Right lobe of liver (tissue), 6 donors: ENCODE measurements at regions of chr2 and their contacts with region 1.

Region 1: GRCh38 chr2:204152616-204153015 is 216.1 kb downstream of the ICOS start:
- DNase-seq: no peak
- ATAC-seq: peak in 2 of 4 donors; percentile 25 to 46
- H3K4me3 ChIP-seq: no peak overlapping the region
- H3K27ac ChIP-seq: no peak overlapping the region
- H3K4me1 ChIP-seq: no peaks in the 10 kb centered on the region
- H3K27me3 ChIP-seq: no peaks in the 10 kb centered on the region
- CTCF ChIP-seq: no peak
- POLR2A ChIP-seq: no peak

Region 2: DNA sequence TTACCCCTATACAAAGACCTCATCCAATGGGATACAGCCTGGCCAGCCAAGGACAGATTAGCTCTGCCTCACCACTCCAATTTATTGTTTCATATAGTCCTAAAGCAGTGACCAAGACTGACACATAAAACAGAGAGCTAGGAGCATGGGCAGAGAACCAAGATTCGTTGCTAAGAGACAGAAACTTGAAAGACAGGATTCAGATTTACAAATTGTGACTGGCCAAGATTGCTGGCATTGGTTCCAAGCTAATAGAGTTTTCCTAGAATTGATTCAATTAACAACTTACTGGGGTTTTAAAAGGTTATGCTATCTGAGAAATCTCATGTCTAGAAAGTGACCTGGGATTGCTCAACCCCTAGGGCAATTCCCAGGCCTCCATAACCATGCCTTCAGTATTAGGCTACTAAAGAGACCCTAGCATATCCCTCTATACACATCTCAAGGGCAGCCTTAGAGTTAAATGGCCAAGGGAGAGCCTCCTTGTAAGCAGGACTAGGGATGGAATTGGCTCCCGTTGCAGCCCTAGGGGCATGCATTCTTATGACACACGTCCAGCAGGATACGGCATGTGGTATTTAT is 140.5 kb before region 1 on chr2:
- intact Hi-C with region 1: no loop called
- DNase-seq: no peak
- ATAC-seq: peak in 1 of 4 donors; percentile 24
- H3K4me3 ChIP-seq: no peak overlapping the region
- H3K27ac ChIP-seq: no peak overlapping the region
- H3K4me1 ChIP-seq: no peaks in the 10 kb centered on the region
- H3K27me3 ChIP-seq: no peaks in the 10 kb centered on the region
- CTCF ChIP-seq: no peak
- POLR2A ChIP-seq: no peak

Region 3: DNA sequence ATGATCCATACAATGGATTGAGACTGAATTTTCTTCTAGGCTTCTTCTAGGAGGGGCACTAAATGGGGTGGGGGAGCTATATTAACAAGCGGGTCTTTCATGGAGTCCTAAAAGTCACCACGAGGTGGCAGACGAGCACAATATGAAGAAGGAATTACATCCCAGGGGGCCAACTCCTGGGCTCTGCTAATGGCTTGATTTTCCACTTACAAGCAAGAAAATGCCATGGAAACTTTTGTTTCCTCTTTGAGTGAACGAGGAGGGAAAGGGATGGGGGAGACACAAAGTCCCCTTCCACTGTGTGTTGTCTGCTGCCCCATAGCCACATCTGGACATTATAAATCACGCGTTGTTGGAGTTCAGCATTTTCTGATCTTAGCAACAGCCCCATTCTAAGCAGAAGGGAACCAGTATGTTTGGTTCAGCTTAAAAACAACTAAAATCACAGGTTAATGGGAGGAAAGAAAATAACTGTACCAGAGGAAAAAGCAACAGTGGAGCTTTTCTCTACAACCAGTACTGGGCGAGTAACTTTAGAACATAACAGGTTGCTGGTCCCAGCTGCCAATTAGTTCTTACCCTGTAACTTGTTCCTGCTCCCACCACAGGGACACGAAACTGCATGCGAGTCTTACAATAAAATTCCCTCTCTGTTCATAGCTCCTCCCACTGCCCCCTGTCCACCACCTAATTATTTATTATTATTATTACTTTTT is 107.7 kb after region 1 on chr2:
- intact Hi-C with region 1: loop called in 1 of 2 experiments (anchors 10 kb)
- DNase-seq: peak in 2 of 3 donors; percentile 40 to 54
- ATAC-seq: peak; percentile 79 to 87 (median 82)
- H3K4me3 ChIP-seq: no peak overlapping the region
- H3K27ac ChIP-seq: no peak overlapping the region
- H3K4me1 ChIP-seq: no peaks in the 10 kb centered on the region
- H3K27me3 ChIP-seq: no peaks in the 10 kb centered on the region
- CTCF ChIP-seq: peak; percentile 70 to 86 (median 76)
- POLR2A ChIP-seq: no peak